Activated CD8-positive, alpha-beta T cell treated with anti-CD3 and anti-CD28 coated beads, Interleukin-2, amount 10 ng/mL, durations not matched to agents 7 days and 5 days (primary cell): ENCODE measurements at regions of chr1 and their contacts with region 1.

Region 1: GRCh38 chr1:21368515-21369289 is 71.2 kb upstream of the NBPF3 start:
- DNase-seq: peak; percentile 60
- ATAC-seq: peak; percentile 80
- H3K4me3 Mint-ChIP-seq: no peak overlapping the region
- H3K27ac Mint-ChIP-seq: no peak overlapping the region
- H3K4me1 Mint-ChIP-seq: peaks cover 9% of the 10 kb centered on the region
- H3K27me3 Mint-ChIP-seq: no peaks in the 10 kb centered on the region

Region 2: DNA sequence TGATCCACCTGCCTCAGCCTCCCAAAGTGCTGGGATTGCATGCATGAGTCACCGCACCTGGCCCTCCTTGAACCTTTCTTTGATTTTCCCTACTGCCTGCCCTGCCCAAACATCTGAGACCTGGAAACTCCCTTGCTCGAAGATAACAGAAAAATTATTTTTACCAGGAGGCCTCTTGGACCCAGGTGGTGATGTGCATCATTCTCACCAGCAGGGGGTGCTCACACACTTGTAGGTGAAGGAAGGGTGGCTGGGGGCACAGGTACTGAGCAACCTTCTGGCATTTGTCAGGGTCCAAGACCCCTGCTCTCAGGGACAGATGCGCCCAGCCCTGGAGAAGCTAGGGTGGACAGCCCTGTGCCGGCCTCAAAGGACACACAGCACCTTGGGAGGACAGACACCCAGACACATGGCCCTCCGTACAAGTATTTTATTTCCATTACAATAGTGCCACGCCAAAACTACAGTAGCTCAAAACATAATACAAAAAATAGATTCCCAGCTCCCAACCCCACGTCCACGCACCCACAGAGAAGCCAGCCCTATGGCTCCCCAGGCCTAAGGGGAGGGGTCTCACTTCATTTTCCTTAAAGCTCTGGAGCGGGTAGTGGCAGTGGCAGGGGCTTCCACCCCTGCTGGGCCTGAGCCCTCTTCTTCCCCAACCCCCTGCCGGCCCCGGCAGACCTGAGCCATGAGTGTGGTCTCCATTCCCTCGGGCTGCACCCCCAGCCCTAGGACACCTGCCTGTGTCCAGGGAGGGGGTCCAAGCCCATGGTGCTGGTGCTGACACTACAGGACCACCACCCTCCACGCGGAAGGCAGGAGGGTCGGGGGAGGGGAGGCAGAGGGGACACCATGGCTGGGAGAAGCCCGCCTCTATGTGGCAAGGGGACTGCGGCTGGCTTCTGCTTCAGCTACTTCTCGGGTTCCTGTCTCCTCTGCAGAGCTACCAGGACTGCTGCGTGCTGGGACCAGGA is 151.6 kb before region 1 on chr1:
- CTCF ChIA-PET with region 1: interaction called, 51 read pairs
- POLR2A ChIA-PET with region 1: no interaction called
- DNase-seq: peak; percentile 81
- ATAC-seq: peak; percentile 64
- H3K4me3 Mint-ChIP-seq: no peak overlapping the region
- H3K27ac Mint-ChIP-seq: no peak overlapping the region
- H3K4me1 Mint-ChIP-seq: no peaks in the 10 kb centered on the region
- H3K27me3 Mint-ChIP-seq: no peaks in the 10 kb centered on the region

Region 3: GRCh38 chr1:21232044-21232443 is 136.7 kb before region 1 on chr1:
- CTCF ChIA-PET with region 1: interaction called, 65 read pairs
- POLR2A ChIA-PET with region 1: interaction called, 4 read pairs
- DNase-seq: peak; percentile 52
- ATAC-seq: no peak
- H3K4me3 Mint-ChIP-seq: no peak overlapping the region
- H3K27ac Mint-ChIP-seq: no peak overlapping the region
- H3K4me1 Mint-ChIP-seq: no peaks in the 10 kb centered on the region
- H3K27me3 Mint-ChIP-seq: no peaks in the 10 kb centered on the region

Region 4: DNA sequence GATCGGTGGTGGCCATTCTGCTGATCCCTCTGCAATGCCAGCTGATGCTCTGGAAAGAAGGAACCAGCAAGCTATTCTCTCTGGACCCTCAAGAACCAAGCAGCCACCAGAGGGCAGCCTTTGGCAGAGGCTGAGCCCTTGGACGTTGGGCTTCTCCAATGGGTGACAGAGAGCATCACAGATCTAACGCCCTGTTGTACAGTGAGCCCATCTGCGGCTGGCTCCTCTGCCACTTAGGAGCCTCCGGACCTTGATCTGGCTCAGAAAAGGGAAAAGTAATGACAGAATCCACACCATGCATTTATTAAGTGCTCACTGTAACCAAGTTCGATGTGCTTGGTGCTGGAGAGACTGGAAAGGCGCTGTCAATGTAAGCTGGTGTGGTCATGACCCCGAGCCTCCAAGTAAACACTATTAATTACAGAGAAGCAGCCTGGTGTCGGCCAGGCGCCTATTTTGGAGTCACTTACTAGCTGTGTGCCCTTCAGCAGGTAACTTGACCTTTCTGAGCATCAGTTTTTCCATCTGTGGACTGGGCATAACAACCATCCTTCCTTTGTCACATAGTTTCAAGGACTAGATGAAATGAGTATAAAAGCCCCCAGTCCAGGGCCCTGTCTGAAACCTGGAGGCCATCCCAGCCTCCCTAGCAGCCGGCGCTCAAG is 113.3 kb before region 1 on chr1:
- CTCF ChIA-PET with region 1: interaction called, 202 read pairs
- POLR2A ChIA-PET with region 1: interaction called, 8 read pairs
- DNase-seq: peak; percentile 87
- ATAC-seq: peak; percentile 79
- H3K4me3 Mint-ChIP-seq: no peak overlapping the region
- H3K27ac Mint-ChIP-seq: no peak overlapping the region
- H3K4me1 Mint-ChIP-seq: peaks cover 36% of the 10 kb centered on the region
- H3K27me3 Mint-ChIP-seq: no peaks in the 10 kb centered on the region

Region 5: GRCh38 chr1:21334214-21335087 is 34.3 kb before region 1 on chr1:
- CTCF ChIA-PET with region 1: interaction called, 11 read pairs
- POLR2A ChIA-PET with region 1: no interaction called
- DNase-seq: peak; percentile 92
- ATAC-seq: peak; percentile 92
- H3K4me3 Mint-ChIP-seq: peak overlapping the region; percentile 75
- H3K27ac Mint-ChIP-seq: peak overlapping the region; percentile 89
- H3K4me1 Mint-ChIP-seq: peaks cover 86% of the 10 kb centered on the region
- H3K27me3 Mint-ChIP-seq: no peaks in the 10 kb centered on the region

Region 6: GRCh38 chr1:21397813-21398188 is 29.1 kb after region 1 on chr1:
- CTCF ChIA-PET with region 1: no interaction called
- POLR2A ChIA-PET with region 1: no interaction called
- DNase-seq: peak; percentile 34
- ATAC-seq: peak; percentile 44
- H3K4me3 Mint-ChIP-seq: peak overlapping the region; percentile 53
- H3K27ac Mint-ChIP-seq: peak overlapping the region; percentile 52
- H3K4me1 Mint-ChIP-seq: peaks cover 13% of the 10 kb centered on the region
- H3K27me3 Mint-ChIP-seq: peaks cover 24% of the 10 kb centered on the region

Region 7: DNA sequence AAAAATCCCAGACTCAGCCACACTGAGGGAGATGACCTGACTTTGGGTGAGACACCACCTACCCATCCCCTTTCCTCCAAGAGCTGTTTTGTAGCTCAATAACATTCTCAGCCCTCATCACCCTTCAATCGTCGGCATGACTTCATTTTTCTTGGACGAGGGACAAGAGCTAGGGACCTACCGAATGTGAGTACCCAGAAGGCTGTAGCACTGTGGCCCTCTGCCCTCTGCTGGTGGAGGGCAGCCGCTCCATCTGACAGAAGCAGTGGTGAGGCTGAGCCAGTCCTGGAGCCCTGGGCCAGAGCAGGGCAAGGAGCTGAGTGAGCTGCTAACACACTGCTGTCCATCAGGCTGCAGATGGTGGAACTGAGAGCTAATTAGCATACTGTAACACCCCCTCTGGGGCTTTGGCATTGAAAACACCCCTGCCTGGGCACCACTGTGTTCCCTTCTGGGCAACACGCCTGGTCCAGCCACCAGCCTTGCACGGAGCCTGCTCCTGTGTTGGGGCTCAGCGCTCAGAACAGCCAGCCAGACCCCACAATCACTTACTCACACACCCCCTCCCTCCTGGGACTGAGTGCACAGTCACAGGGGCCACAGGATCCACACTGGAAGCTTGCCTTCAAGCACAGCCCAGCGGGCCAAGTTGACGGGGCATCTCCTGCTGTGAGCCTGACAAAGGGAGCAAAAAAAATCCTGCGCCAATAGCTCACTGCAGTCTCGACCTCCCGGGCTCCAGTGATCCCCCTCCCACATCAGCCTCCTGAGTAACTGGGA is 122.3 kb after region 1 on chr1:
- CTCF ChIA-PET with region 1: interaction called, 15 read pairs
- POLR2A ChIA-PET with region 1: no interaction called
- DNase-seq: peak; percentile 47
- ATAC-seq: no peak
- H3K4me3 Mint-ChIP-seq: no peak overlapping the region
- H3K27ac Mint-ChIP-seq: no peak overlapping the region
- H3K4me1 Mint-ChIP-seq: peaks cover 10% of the 10 kb centered on the region
- H3K27me3 Mint-ChIP-seq: peaks cover 25% of the 10 kb centered on the region